AG04450 (cell line): ENCODE measurements at regions of chr2 and their contacts with region 1.

Region 1: DNA sequence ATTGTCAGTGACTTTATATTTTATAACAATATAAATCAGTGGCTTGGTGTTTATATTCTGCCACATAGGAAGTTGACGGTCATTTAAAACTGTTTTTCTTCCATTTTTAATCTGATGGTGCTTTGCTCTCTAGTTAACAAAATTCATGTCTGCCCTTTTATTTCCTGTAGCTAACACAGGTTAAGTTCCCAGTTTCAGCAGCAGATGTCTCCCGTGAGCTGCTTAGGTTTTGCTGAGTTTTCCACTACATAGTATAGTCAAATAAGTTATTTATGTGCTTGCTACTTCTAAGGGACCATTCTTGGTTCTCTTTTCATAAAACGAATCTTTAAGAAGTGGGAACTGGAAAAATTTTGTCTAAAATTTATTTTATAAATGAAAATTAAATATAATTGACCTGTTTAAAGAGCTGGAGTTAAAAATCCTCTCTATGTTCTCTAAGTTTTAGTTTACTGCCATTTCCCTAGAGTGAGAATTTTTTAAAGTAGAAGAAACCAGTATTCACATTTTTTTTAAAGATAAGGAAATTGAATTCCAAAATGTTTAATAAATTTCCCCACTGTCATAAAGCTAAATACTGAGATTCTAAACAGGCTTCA is 20.6 kb downstream of the HTR2B start:
- DNase-seq: peak; percentile 44
- H3K4me3 ChIP-seq: no peak overlapping the region
- H3K27ac ChIP-seq: no peak overlapping the region
- H3K27me3 ChIP-seq: no peaks in the 10 kb centered on the region
- CTCF ChIP-seq: peak; percentile 94

Region 2: DNA sequence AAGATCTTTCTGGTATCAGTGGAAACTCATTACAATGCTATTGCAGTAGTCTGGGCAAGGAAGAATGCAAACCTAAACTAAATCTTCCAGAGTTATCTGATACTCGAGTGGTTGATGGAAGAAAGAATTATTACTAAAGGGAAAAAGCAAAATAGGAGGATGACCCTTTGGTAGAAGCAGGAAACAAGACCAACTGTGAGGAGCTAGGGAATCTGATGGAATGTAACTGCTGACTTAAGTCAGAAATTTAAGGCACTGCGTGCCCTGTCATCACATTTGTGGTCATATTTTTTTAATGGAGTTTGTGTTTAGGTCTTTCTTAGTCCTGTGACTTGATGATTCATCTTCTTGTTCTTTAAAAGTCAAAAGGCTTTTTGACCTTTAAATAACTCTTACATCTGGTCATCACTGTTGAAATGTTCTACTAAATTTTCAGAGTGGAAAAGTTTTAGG is 57.7 kb after region 1 on chr2:
- CTCF ChIA-PET with region 1: interaction called, 10 read pairs
- POLR2A ChIA-PET with region 1: no interaction called
- DNase-seq: peak; percentile 98
- H3K4me3 ChIP-seq: no peak overlapping the region
- H3K27ac ChIP-seq: peak overlapping the region; percentile 98
- H3K27me3 ChIP-seq: no peaks in the 10 kb centered on the region
- CTCF ChIP-seq: no peak

Region 3: GRCh38 chr2:231411831-231412617 is 307.8 kb after region 1 on chr2:
- CTCF ChIA-PET with region 1: interaction called, 45 read pairs
- POLR2A ChIA-PET with region 1: no interaction called
- DNase-seq: peak; percentile 50
- H3K4me3 ChIP-seq: peak overlapping the region; percentile 73
- H3K27ac ChIP-seq: no peak overlapping the region
- H3K27me3 ChIP-seq: no peaks in the 10 kb centered on the region
- CTCF ChIP-seq: peak; percentile 92